Breast epithelium (tissue), 4 donors: ENCODE measurements at regions of chr14 and their contacts with region 1.

Region 1: GRCh38 chr14:84209021-84209420 is 1320.9 kb upstream of the FLRT2 start:
- DNase-seq: no peak
- H3K4me3 ChIP-seq: no peak overlapping the region
- H3K27ac ChIP-seq: no peak overlapping the region
- H3K4me1 ChIP-seq: no peaks in the 10 kb centered on the region
- H3K27me3 ChIP-seq: no peaks in the 10 kb centered on the region
- CTCF ChIP-seq: no peak
- POLR2A ChIP-seq: no peak

Region 2: GRCh38 chr14:84181072-84181471 is 27.9 kb before region 1 on chr14:
- intact Hi-C with region 1: no loop called
- DNase-seq: no peak
- H3K4me3 ChIP-seq: no peak overlapping the region
- H3K27ac ChIP-seq: no peak overlapping the region
- H3K4me1 ChIP-seq: no peaks in the 10 kb centered on the region
- H3K27me3 ChIP-seq: no peaks in the 10 kb centered on the region
- CTCF ChIP-seq: no peak
- POLR2A ChIP-seq: no peak

Region 3: GRCh38 chr14:84262932-84263331 is 53.9 kb after region 1 on chr14:
- intact Hi-C with region 1: no loop called
- DNase-seq: no peak
- H3K4me3 ChIP-seq: no peak overlapping the region
- H3K27ac ChIP-seq: no peak overlapping the region
- H3K4me1 ChIP-seq: no peaks in the 10 kb centered on the region
- H3K27me3 ChIP-seq: no peaks in the 10 kb centered on the region
- CTCF ChIP-seq: no peak
- POLR2A ChIP-seq: no peak

Region 4: GRCh38 chr14:86022031-86022629 is 1813.1 kb after region 1 on chr14:
- intact Hi-C with region 1: loop called (anchors 5 kb)
- DNase-seq: no peak
- H3K4me3 ChIP-seq: no peak overlapping the region
- H3K27ac ChIP-seq: no peak overlapping the region
- H3K4me1 ChIP-seq: no peaks in the 10 kb centered on the region
- H3K27me3 ChIP-seq: no peaks in the 10 kb centered on the region
- CTCF ChIP-seq: no peak
- POLR2A ChIP-seq: no peak